Esophagus squamous epithelium (tissue), 5 donors: ENCODE measurements at regions of chr2 and their contacts with region 1.

Region 1: DNA sequence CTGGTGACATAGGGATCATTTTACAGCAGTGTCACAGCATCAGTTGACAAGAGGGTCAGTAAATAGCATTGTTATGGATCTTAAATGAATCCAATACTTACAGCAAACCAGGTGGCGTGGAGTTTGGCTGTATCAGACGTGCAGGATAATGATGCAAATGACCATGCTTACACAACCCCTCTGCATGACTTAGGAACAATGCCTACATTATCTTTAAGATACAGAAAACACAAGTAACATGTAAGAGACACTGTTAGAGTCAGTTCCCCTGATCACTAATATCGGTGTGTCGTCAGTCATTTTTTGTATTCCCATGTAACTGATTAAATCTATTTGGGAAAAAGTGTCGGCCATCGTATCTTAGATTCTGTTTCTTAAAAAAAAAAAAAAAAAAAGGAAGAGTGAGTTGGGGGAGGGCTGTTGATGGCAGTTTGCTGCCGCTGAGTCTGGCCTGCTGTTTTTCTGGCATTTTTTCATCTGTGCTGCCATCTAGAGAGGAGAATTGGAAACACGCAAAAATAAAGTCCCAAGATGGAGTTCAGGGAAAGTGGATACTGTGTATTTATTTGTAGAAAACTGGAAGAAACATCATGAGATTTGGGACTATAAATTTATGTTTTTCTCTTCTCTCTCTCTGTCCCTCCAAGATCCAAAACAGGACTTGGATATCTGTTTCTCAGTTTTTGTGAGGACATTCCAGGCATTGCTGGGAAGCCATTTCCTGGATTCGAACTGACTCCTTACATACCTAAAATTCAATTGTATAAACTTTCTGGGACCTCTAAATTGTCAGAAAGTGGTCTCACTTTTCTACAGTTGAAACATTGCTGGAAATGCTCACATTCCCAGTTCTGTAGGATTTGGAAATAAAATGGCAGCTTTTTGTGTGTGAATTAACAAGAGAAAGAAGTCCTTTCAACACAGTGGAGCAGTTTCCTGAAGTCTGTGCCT is 60.3 kb upstream of the AGPS start:
- DNase-seq: no peak
- H3K4me3 ChIP-seq: peak overlapping the region in 2 of 4 donors; percentile 6 to 25
- H3K27ac ChIP-seq: peak overlapping the region in 3 of 4 donors; percentile 30 to 67 (median 30)
- H3K4me1 ChIP-seq: peaks cover 0 to 33% (median 3%) of the 10 kb centered on the region in 3 donors
- H3K27me3 ChIP-seq: no peaks in the 10 kb centered on the region
- CTCF ChIP-seq: peak in 5 of 6 experiments; percentile 58 to 78 (median 70)
- POLR2A ChIP-seq: no peak

Region 2: DNA sequence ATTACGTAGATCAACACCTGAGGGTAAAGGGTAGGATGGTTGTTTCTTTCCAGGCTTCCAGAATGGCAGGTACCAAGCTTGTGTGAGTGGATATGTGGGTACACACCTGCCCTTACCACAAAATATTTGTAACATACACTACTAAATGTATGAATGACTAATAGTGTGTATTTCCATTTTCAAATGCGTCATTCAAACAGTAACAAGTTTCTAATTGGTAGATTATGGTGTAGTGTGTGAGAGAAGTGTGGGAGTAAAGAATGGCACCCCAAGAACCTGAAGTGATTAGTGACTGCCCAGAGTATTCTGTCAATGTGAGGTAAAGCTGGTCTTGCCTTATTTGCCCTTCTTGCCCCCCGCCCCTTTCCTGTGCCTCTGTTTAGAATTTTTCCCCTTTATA is 81.4 kb after region 1 on chr2:
- intact Hi-C with region 1: loop called (anchors 5 kb)
- DNase-seq: no peak
- H3K4me3 ChIP-seq: no peak overlapping the region
- H3K27ac ChIP-seq: no peak overlapping the region
- H3K4me1 ChIP-seq: peaks cover 0 to 14% (median 1%) of the 10 kb centered on the region in 3 donors
- H3K27me3 ChIP-seq: no peaks in the 10 kb centered on the region
- CTCF ChIP-seq: no peak
- POLR2A ChIP-seq: no peak

Region 3: GRCh38 chr2:177724398-177725287 is 392.3 kb after region 1 on chr2:
- intact Hi-C with region 1: loop called (anchors 10 kb)
- DNase-seq: no peak
- H3K4me3 ChIP-seq: no peak overlapping the region
- H3K27ac ChIP-seq: no peak overlapping the region
- H3K4me1 ChIP-seq: no peaks in the 10 kb centered on the region
- H3K27me3 ChIP-seq: no peaks in the 10 kb centered on the region
- CTCF ChIP-seq: peak in 5 of 6 experiments; percentile 60 to 80 (median 78)
- POLR2A ChIP-seq: no peak